Aorta (tissue), 5 donors: ENCODE measurements at regions of chr2 and their contacts with region 1.

Region 1: GRCh38 chr2:197310271-197310985 is at the start of gene ANKRD44:
- DNase-seq: peak; percentile 96 to 97
- ATAC-seq: peak; percentile 96
- H3K4me3 ChIP-seq: peak within 1 kb of the TSS; percentile 78 to 97
- H3K27ac ChIP-seq: peak within 1 kb of the TSS; percentile 43 to 95
- H3K4me1 ChIP-seq: peaks cover 2 to 9% of the 10 kb centered on the region in 2 donors
- H3K27me3 ChIP-seq: no peaks in the 10 kb centered on the region
- total RNA-seq, gene ANKRD44: 53.3 to 62.6 TPM

Region 2: GRCh38 chr2:197011799-197012641 is 298.4 kb before region 1 on chr2:
- intact Hi-C with region 1: loop called (anchors 10 kb)
- DNase-seq: no peak
- ATAC-seq: no peak
- H3K4me3 ChIP-seq: no peak overlapping the region
- H3K27ac ChIP-seq: no peak overlapping the region
- H3K4me1 ChIP-seq: no peaks in the 10 kb centered on the region
- H3K27me3 ChIP-seq: no peaks in the 10 kb centered on the region

Region 3: GRCh38 chr2:197052356-197052755 is 258.1 kb before region 1 on chr2:
- intact Hi-C with region 1: no loop called
- DNase-seq: no peak
- ATAC-seq: no peak
- H3K4me3 ChIP-seq: no peak overlapping the region
- H3K27ac ChIP-seq: no peak overlapping the region
- H3K4me1 ChIP-seq: no peaks in the 10 kb centered on the region
- H3K27me3 ChIP-seq: no peaks in the 10 kb centered on the region

Region 4: GRCh38 chr2:197113275-197113711 is 197.1 kb before region 1 on chr2:
- intact Hi-C with region 1: loop called (anchors 5 kb)
- DNase-seq: no peak
- ATAC-seq: no peak
- H3K4me3 ChIP-seq: no peak overlapping the region
- H3K27ac ChIP-seq: no peak overlapping the region
- H3K4me1 ChIP-seq: no peaks in the 10 kb centered on the region
- H3K27me3 ChIP-seq: no peaks in the 10 kb centered on the region

Region 5: GRCh38 chr2:197191177-197191939 is 119.1 kb before region 1 on chr2:
- intact Hi-C with region 1: loop called (anchors 2 kb)
- DNase-seq: no peak
- ATAC-seq: no peak
- H3K4me3 ChIP-seq: no peak overlapping the region
- H3K27ac ChIP-seq: no peak overlapping the region
- H3K4me1 ChIP-seq: peaks cover 0 to 5% of the 10 kb centered on the region in 2 donors
- H3K27me3 ChIP-seq: no peaks in the 10 kb centered on the region

Region 6: DNA sequence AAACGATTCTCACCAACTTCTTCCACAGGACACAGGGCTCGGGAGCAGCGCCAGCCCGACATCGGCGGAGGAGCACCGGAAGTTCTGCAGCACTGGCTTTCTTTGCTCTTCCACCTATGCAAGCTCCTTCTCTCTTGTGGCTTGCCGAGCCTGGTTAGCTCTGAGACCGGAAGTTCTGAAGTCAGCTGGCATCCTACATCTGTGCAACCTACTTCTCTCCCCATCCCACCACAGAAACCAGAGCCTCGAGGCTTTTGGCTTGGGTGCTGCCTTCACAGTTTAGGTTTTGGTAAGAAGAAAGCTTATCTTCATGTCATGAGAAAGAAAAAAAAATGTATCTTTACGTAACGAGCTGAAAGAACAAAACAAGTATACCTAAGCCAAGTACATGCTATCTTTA is 111.5 kb before region 1 on chr2:
- intact Hi-C with region 1: loop called in 1 of 2 experiments (anchors 2 kb)
- DNase-seq: peak; percentile 77 to 78
- ATAC-seq: peak; percentile 66
- H3K4me3 ChIP-seq: peak overlapping the region in 1 of 2 donors; percentile 68
- H3K27ac ChIP-seq: peak overlapping the region; percentile 37 to 51
- H3K4me1 ChIP-seq: peaks cover 6 to 10% of the 10 kb centered on the region in 2 donors
- H3K27me3 ChIP-seq: no peaks in the 10 kb centered on the region

Region 7: GRCh38 chr2:197240421-197241041 is 69.9 kb before region 1 on chr2:
- intact Hi-C with region 1: no loop called
- DNase-seq: no peak
- ATAC-seq: no peak
- H3K4me3 ChIP-seq: no peak overlapping the region
- H3K27ac ChIP-seq: no peak overlapping the region
- H3K4me1 ChIP-seq: peaks cover 0 to 4% of the 10 kb centered on the region in 2 donors
- H3K27me3 ChIP-seq: no peaks in the 10 kb centered on the region

Region 8: DNA sequence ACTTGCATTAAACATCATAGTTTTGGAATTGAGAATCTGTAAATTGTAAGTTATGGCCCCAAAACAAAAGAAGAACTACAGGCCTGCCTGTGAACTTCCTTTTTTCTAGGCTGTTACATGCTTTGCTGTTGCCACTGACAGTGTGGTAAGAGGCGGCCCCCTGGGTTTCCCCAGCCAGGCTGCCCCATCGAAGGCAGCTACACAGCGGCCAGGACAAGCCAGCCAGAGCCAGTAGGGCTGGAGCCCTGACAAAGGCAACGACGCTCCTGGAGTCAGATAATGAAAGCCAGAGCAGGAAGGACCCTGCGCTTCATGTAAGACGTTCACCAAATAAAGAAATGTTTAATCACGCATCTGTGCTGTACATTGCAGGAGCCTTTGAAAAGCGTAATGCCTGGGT is 54.9 kb before region 1 on chr2:
- intact Hi-C with region 1: loop called in 1 of 2 experiments (anchors 10 kb)
- DNase-seq: peak; percentile 79 to 92
- ATAC-seq: peak; percentile 88
- H3K4me3 ChIP-seq: no peak overlapping the region
- H3K27ac ChIP-seq: no peak overlapping the region
- H3K4me1 ChIP-seq: peaks cover 0 to 2% of the 10 kb centered on the region in 2 donors
- H3K27me3 ChIP-seq: no peaks in the 10 kb centered on the region

Region 9: GRCh38 chr2:197369228-197369932 is 59.0 kb after region 1 on chr2:
- intact Hi-C with region 1: no loop called
- DNase-seq: no peak
- ATAC-seq: no peak
- H3K4me3 ChIP-seq: no peak overlapping the region
- H3K27ac ChIP-seq: no peak overlapping the region
- H3K4me1 ChIP-seq: no peaks in the 10 kb centered on the region
- H3K27me3 ChIP-seq: no peaks in the 10 kb centered on the region